ENCODE measurements at regions of chr3 and their contacts with region 1.

Region 1: GRCh38 chr3:170357176-170357919 is at the start of gene SKIL:
- DNase-seq: peak; percentile 99
- ATAC-seq: peak; percentile 56
- H3K4me3 ChIP-seq: peak within 1 kb of the TSS; percentile 70 to 90 (median 82)
- H3K4me3 Mint-ChIP-seq: peak within 1 kb of the TSS; percentile 91
- H3K27ac ChIP-seq: peak within 1 kb of the TSS; percentile 93 to 100
- H3K27ac Mint-ChIP-seq: peak within 1 kb of the TSS; percentile 99
- H3K4me1 ChIP-seq: peaks cover 70 to 71% of the 10 kb centered on the region in 2 donors
- H3K4me1 Mint-ChIP-seq: peaks cover 72% of the 10 kb centered on the region
- H3K27me3 ChIP-seq: no peaks in the 10 kb centered on the region
- H3K27me3 Mint-ChIP-seq: no peaks in the 10 kb centered on the region
- CTCF ChIP-seq: no peak
- total RNA-seq, gene SKIL: 145 and 148 TPM in 2 replicates

Region 2: GRCh38 chr3:169836078-169836941 is 521.0 kb before region 1 on chr3:
- CTCF ChIA-PET with region 1: no interaction called
- POLR2A ChIA-PET with region 1: no interaction called
- intact Hi-C with region 1: loop called (anchors 10 kb)
- DNase-seq: peak; percentile 77
- ATAC-seq: peak; percentile 97
- H3K4me3 ChIP-seq: no peak overlapping the region
- H3K4me3 Mint-ChIP-seq: peak overlapping the region; percentile 21
- H3K27ac ChIP-seq: peak overlapping the region; percentile 75 to 91
- H3K27ac Mint-ChIP-seq: peak overlapping the region; percentile 97
- H3K4me1 ChIP-seq: peaks cover 31 to 35% of the 10 kb centered on the region in 2 donors
- H3K4me1 Mint-ChIP-seq: peaks cover 44% of the 10 kb centered on the region
- H3K27me3 ChIP-seq: no peaks in the 10 kb centered on the region
- H3K27me3 Mint-ChIP-seq: no peaks in the 10 kb centered on the region
- CTCF ChIP-seq: no peak

Region 3: DNA sequence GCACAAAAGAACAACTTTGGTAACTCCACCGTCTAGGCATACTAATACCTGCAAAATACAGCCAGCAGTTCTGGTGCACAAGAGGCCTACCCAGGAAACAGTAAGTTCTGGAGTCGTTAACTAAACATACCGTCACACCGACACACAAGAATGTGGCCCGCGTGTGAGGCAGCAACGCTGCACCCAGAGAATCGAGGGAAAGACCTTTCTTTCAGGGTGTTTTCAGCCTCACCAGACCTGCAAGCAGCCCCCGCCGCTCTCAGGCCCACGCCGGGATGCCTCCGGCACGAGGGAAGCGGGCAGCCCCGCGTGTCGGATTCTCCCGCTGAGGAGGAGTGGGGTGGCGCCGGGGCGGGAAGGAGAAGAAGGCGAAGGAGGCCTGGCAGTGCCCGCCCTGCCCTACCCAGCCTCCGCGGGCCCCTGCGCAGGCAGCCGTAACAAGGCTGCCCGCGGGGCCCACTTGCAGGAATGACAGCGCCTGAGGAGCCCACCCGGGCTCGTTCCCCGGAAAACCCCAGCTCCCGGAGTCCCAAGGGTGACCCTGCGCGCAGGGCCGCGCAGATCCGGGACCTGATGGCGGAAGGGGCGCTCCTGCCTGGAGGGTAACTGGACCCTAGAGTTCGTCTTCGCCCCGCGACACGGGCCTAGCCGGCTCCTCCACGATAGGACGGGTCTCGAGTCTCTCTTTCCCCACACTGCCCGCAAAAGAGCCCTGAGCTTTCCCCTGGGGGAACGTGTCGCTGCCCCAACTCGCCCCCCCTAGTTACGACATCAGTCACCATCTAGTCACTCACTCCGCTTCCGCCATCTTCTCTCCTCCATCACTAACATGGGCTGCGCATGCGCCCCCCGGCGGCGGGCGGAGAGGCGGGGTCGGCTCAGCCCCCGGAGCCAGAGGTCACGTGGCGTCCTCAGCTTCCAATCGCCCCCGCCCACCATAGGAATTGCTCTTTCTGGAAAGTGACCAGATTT is 176.2 kb before region 1 on chr3 and contains the start of gene PHC3:
- CTCF ChIA-PET with region 1: no interaction called
- POLR2A ChIA-PET with region 1: no interaction called
- intact Hi-C with region 1: loop called (anchors 2 kb)
- DNase-seq: peak; percentile 95
- ATAC-seq: peak; percentile 82
- H3K4me3 ChIP-seq: peak within 1 kb of the TSS; percentile 61 to 98 (median 95)
- H3K4me3 Mint-ChIP-seq: peak within 1 kb of the TSS; percentile 98
- H3K27ac ChIP-seq: peak within 1 kb of the TSS; percentile 96 to 98
- H3K27ac Mint-ChIP-seq: peak within 1 kb of the TSS; percentile 100
- H3K4me1 ChIP-seq: peaks cover 20 to 25% of the 10 kb centered on the region in 2 donors
- H3K4me1 Mint-ChIP-seq: peaks cover 28% of the 10 kb centered on the region
- H3K27me3 ChIP-seq: no peaks in the 10 kb centered on the region
- H3K27me3 Mint-ChIP-seq: no peaks in the 10 kb centered on the region
- CTCF ChIP-seq: no peak
- total RNA-seq, gene PHC3: 159 and 165 TPM in 2 replicates

Region 4: DNA sequence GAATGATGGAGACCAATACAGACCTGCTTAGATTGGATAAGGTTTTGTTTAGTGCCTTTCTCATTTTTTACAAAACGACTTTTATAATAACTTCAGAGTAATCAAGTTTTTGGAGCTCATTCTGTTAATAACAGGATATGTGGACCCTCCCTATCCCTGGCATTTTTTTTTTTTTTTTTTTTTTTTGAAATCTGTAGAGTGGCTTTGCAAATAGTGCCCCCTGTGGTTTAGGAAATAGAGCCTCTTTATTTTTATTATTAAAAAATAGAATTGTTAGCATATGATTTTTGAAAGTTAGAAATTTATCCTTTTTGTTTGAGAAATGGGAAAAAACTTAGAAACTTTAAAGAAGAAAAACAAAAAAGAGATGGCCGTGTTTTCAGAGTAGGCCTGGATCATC is 11.6 kb after region 1 on chr3:
- CTCF ChIA-PET with region 1: interaction called, 5 read pairs
- POLR2A ChIA-PET with region 1: interaction called, 5 read pairs
- intact Hi-C with region 1: loop called (anchors 1 kb)
- DNase-seq: no peak
- ATAC-seq: no peak
- H3K4me3 ChIP-seq: no peak overlapping the region
- H3K4me3 Mint-ChIP-seq: peak overlapping the region; percentile 44
- H3K27ac ChIP-seq: no peak overlapping the region
- H3K27ac Mint-ChIP-seq: no peak overlapping the region
- H3K4me1 ChIP-seq: peaks cover 42 to 55% of the 10 kb centered on the region in 2 donors
- H3K4me1 Mint-ChIP-seq: peaks cover 63% of the 10 kb centered on the region
- H3K27me3 ChIP-seq: no peaks in the 10 kb centered on the region
- H3K27me3 Mint-ChIP-seq: no peaks in the 10 kb centered on the region
- CTCF ChIP-seq: peak; percentile 44

Region 5: GRCh38 chr3:170869645-170870593 is 512.6 kb after region 1 on chr3 and contains the start of gene RPL22L1:
- CTCF ChIA-PET with region 1: no interaction called
- POLR2A ChIA-PET with region 1: interaction called, 4 read pairs
- intact Hi-C with region 1: loop called (anchors 2 kb)
- DNase-seq: peak; percentile 98
- ATAC-seq: peak; percentile 89
- H3K4me3 ChIP-seq: peak within 1 kb of the TSS; percentile 67 to 98 (median 92)
- H3K4me3 Mint-ChIP-seq: peak within 1 kb of the TSS; percentile 95
- H3K27ac ChIP-seq: peak within 1 kb of the TSS; percentile 93 to 98
- H3K27ac Mint-ChIP-seq: peak within 1 kb of the TSS; percentile 97
- H3K4me1 ChIP-seq: peaks cover 32 to 36% of the 10 kb centered on the region in 2 donors
- H3K4me1 Mint-ChIP-seq: peaks cover 30% of the 10 kb centered on the region
- H3K27me3 ChIP-seq: no peaks in the 10 kb centered on the region
- H3K27me3 Mint-ChIP-seq: no peaks in the 10 kb centered on the region
- CTCF ChIP-seq: no peak
- total RNA-seq, gene RPL22L1: 43.3 and 46.1 TPM in 2 replicates

Region 6: GRCh38 chr3:171459942-171460724 is 1102.8 kb after region 1 on chr3 and contains the start of gene TNIK:
- CTCF ChIA-PET with region 1: no interaction called
- POLR2A ChIA-PET with region 1: no interaction called
- intact Hi-C with region 1: loop called (anchors 5 kb)
- DNase-seq: peak; percentile 87
- ATAC-seq: peak; percentile 88
- H3K4me3 ChIP-seq: peak within 1 kb of the TSS; percentile 60 to 92 (median 80)
- H3K4me3 Mint-ChIP-seq: peak within 1 kb of the TSS; percentile 90
- H3K27ac ChIP-seq: peak within 1 kb of the TSS in 1 of 2 donors; percentile 32
- H3K27ac Mint-ChIP-seq: peak within 1 kb of the TSS; percentile 88
- H3K4me1 ChIP-seq: peaks cover 26 to 27% of the 10 kb centered on the region in 2 donors
- H3K4me1 Mint-ChIP-seq: peaks cover 39% of the 10 kb centered on the region
- H3K27me3 ChIP-seq: peaks cover 0 to 15% (median 2%) of the 10 kb centered on the region in 4 experiments
- H3K27me3 Mint-ChIP-seq: peaks cover 18% of the 10 kb centered on the region
- CTCF ChIP-seq: peak; percentile 40
- total RNA-seq, gene TNIK: 7.5 and 7.7 TPM in 2 replicates